Tibial artery (tissue), 4 donors: ENCODE measurements at regions of chr10 and their contacts with region 1.

Region 1: GRCh38 chr10:117537436-117537903 is 5.1 kb upstream of the EMX2 start:
- DNase-seq: no peak
- H3K4me3 ChIP-seq: peak overlapping the region; percentile 34 to 44
- H3K27ac ChIP-seq: peak overlapping the region; percentile 8 to 73
- H3K4me1 ChIP-seq: peaks cover 0 to 56% (median 25%) of the 10 kb centered on the region in 4 donors
- H3K27me3 ChIP-seq: peaks cover 0 to 56% of the 10 kb centered on the region in 2 donors
- CTCF ChIP-seq: peak; percentile 61 to 69

Region 2: GRCh38 chr10:117375360-117376178 is 161.9 kb before region 1 on chr10 and contains the start of gene PDZD8:
- intact Hi-C with region 1: loop called (anchors 5 kb)
- DNase-seq: peak; percentile 91 to 95
- H3K4me3 ChIP-seq: peak within 1 kb of the TSS; percentile 90 to 91
- H3K27ac ChIP-seq: peak within 1 kb of the TSS; percentile 95 to 96
- H3K4me1 ChIP-seq: peaks cover 0 to 38% (median 15%) of the 10 kb centered on the region in 4 donors
- H3K27me3 ChIP-seq: peaks cover 0 to 12% of the 10 kb centered on the region in 2 donors
- CTCF ChIP-seq: no peak

Region 3: GRCh38 chr10:117442944-117443685 is 94.4 kb before region 1 on chr10:
- intact Hi-C with region 1: loop called (anchors 5 kb)
- DNase-seq: peak; percentile 90 to 95
- H3K4me3 ChIP-seq: peak overlapping the region in 1 of 2 donors; percentile 3
- H3K27ac ChIP-seq: peak overlapping the region; percentile 64 to 65
- H3K4me1 ChIP-seq: peaks cover 0 to 29% (median 22%) of the 10 kb centered on the region in 4 donors
- H3K27me3 ChIP-seq: no peaks in the 10 kb centered on the region
- CTCF ChIP-seq: peak; percentile 92 to 93

Region 4: GRCh38 chr10:118046395-118047156 is 509.1 kb after region 1 on chr10 and contains the start of gene RAB11FIP2:
- intact Hi-C with region 1: loop called (anchors 2 kb)
- DNase-seq: peak; percentile 98
- H3K4me3 ChIP-seq: peak within 1 kb of the TSS; percentile 85 to 99
- H3K27ac ChIP-seq: peak within 1 kb of the TSS; percentile 97 to 99
- H3K4me1 ChIP-seq: peaks cover 0 to 46% (median 24%) of the 10 kb centered on the region in 4 donors
- H3K27me3 ChIP-seq: no peaks in the 10 kb centered on the region
- CTCF ChIP-seq: peak in 1 of 2 experiments; percentile 5

Region 5: GRCh38 chr10:118106426-118106825 is 569.0 kb after region 1 on chr10:
- intact Hi-C with region 1: loop called (anchors 5 kb)
- DNase-seq: no peak
- H3K4me3 ChIP-seq: no peak overlapping the region
- H3K27ac ChIP-seq: no peak overlapping the region
- H3K4me1 ChIP-seq: peaks cover 0 to 11% (median 0%) of the 10 kb centered on the region in 4 donors
- H3K27me3 ChIP-seq: no peaks in the 10 kb centered on the region
- CTCF ChIP-seq: peak; percentile 23 to 38

Region 6: GRCh38 chr10:118241229-118242137 is 704.0 kb after region 1 on chr10:
- intact Hi-C with region 1: loop called (anchors 2 kb)
- DNase-seq: peak; percentile 82 to 87
- H3K4me3 ChIP-seq: no peak overlapping the region
- H3K27ac ChIP-seq: no peak overlapping the region
- H3K4me1 ChIP-seq: no peaks in the 10 kb centered on the region
- H3K27me3 ChIP-seq: peaks cover 0 to 31% of the 10 kb centered on the region in 2 donors
- CTCF ChIP-seq: peak; percentile 86 to 89

Region 7: GRCh38 chr10:118341791-118342637 is 804.5 kb after region 1 on chr10 and contains the start of gene FAM204A:
- intact Hi-C with region 1: loop called (anchors 10 kb)
- DNase-seq: peak; percentile 95 to 96
- H3K4me3 ChIP-seq: peak within 1 kb of the TSS; percentile 79 to 82
- H3K27ac ChIP-seq: peak within 1 kb of the TSS; percentile 81 to 83
- H3K4me1 ChIP-seq: peaks cover 0 to 39% (median 13%) of the 10 kb centered on the region in 4 donors
- H3K27me3 ChIP-seq: no peaks in the 10 kb centered on the region
- CTCF ChIP-seq: no peak

Region 8: DNA sequence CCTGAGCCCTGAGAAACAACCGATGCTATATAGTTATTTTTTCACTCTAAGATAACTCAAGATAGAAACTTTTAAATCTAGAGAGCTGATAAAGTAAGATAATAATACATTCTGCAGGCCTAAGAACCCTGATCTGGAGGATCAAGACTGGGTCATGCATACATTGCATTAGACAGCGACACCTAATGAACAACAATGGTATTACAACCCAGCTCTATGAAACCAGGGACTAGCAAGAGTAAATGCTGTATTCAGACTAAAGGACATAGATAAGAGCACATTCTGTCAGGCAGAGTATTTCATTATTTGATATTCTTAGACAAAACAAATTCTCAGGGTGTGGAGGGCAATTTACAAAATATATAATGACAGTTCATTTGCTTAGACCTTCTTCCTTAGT is 1818.5 kb after region 1 on chr10:
- intact Hi-C with region 1: no loop called
- DNase-seq: no peak
- H3K4me3 ChIP-seq: no peak overlapping the region
- H3K27ac ChIP-seq: no peak overlapping the region
- H3K4me1 ChIP-seq: peaks cover 0 to 31% (median 12%) of the 10 kb centered on the region in 4 donors
- H3K27me3 ChIP-seq: no peaks in the 10 kb centered on the region
- CTCF ChIP-seq: peak in 1 of 2 experiments; percentile 12